Prostate gland (tissue), 2 donors: ENCODE measurements at regions of chr22 and their contacts with region 1.

Region 1: GRCh38 chr22:23315341-23315917 is 135.1 kb downstream of the BCR start:
- DNase-seq: peak; percentile 57
- H3K4me3 ChIP-seq: no peak overlapping the region
- H3K27ac ChIP-seq: no peak overlapping the region
- H3K4me1 ChIP-seq: no peaks in the 10 kb centered on the region
- H3K27me3 ChIP-seq: no peaks in the 10 kb centered on the region
- CTCF ChIP-seq: peak in 3 of 4 experiments; percentile 57 to 75 (median 74)
- POLR2A ChIP-seq: no peak

Region 2: DNA sequence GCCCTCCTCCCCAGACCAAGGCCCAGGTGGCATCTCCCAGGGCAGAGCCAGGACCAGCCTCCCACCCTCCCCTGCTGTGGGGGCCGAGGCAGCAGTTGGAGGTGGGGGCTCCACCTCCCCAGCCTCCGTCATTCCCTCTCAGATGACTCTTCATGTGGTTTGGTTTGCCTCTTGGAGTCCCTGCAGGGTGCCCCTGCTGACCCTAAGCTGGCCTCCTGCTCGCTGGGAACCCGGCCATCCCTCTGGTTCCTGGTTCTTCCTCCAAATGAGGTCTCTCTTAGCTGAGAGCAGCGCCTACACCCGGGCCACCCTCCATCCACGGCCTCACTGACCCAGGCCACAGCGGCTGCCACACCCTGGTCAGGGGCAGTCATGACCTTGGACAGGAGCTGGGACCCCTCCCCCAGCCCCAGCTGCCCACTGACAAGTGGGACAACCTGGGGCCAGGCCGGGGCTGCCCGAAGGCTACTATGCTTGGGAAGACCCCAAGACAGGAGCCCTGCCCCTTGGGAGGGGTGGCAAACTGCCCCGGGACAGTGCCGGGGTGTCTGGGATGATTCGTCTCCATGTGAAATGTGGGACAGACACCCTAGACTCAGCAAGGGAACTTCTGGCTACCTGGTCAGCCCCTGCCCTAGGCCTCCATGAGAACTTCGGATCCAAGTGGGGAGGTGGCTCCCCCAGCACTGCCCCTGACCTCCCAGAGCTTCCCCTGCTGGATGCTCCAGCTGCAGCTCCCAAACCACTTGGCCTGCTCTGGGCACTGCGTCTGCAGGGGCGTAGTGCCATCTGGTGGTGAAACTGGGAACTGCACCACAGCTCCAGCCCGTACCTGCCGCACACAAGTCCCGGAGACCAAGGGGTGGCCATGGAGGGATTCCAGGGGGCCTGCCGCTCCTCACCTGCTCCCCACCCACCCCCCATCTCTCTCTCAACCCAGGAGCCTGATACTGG is 70.1 kb after region 1 on chr22:
- intact Hi-C with region 1: loop called (anchors 5 kb)
- DNase-seq: peak; percentile 82
- H3K4me3 ChIP-seq: no peak overlapping the region
- H3K27ac ChIP-seq: no peak overlapping the region
- H3K4me1 ChIP-seq: no peaks in the 10 kb centered on the region
- H3K27me3 ChIP-seq: no peaks in the 10 kb centered on the region
- CTCF ChIP-seq: peak; percentile 98 to 99 (median 99)
- POLR2A ChIP-seq: no peak